MCF 10A (cell line): ENCODE measurements at regions of chr3 and their contacts with region 1.

Region 1: DNA sequence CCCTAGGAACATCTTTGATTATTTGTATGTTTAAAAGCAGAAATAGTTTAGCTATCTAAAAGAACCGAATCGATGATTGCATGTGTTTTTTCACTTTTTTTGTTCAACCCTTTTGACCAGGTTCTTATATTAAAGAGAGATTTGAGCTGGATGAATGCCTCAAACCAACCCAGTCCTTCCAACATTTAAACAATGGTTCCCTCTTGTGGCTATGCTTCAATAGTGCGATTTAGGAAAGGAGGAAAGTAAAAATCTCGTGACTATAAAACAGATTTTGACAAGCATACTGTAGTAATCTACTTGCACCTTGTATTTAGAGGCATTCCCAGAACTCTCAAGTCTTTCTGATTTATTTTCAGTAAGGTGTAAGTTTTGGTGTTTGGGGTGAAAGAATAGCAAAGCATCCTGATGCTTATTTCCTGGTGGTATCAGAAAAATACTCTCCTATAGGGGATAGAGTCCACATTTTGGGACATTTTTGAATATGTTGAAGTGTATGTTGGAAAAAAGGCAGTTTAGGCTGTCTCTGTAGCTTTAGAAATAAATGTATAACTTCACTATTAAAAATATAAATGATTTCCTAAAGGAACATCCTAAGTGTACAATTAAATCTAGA is 159.6 kb upstream of the KCNH8 start:
- DNase-seq: peak; percentile 63
- H3K4me3 Mint-ChIP-seq: no peak overlapping the region
- H3K27ac Mint-ChIP-seq: no peak overlapping the region
- H3K4me1 Mint-ChIP-seq: peaks cover 6% of the 10 kb centered on the region
- H3K27me3 Mint-ChIP-seq: no peaks in the 10 kb centered on the region
- CTCF ChIP-seq: peak; percentile 73

Region 2: GRCh38 chr3:17894434-17895060 is 1094.2 kb before region 1 on chr3:
- CTCF ChIA-PET with region 1: no interaction called
- POLR2A ChIA-PET with region 1: no interaction called
- intact Hi-C with region 1: loop called (anchors 5 kb)
- DNase-seq: peak; percentile 75
- H3K4me3 Mint-ChIP-seq: no peak overlapping the region
- H3K27ac Mint-ChIP-seq: no peak overlapping the region
- H3K4me1 Mint-ChIP-seq: peaks cover 9% of the 10 kb centered on the region
- H3K27me3 Mint-ChIP-seq: no peaks in the 10 kb centered on the region
- CTCF ChIP-seq: peak; percentile 63

Region 3: GRCh38 chr3:18424729-18425640 is 563.7 kb before region 1 on chr3 and contains the start of gene SATB1:
- CTCF ChIA-PET with region 1: no interaction called
- POLR2A ChIA-PET with region 1: no interaction called
- intact Hi-C with region 1: loop called (anchors 10 kb)
- DNase-seq: peak; percentile 39
- H3K4me3 Mint-ChIP-seq: peak within 1 kb of the TSS; percentile 78
- H3K27ac Mint-ChIP-seq: no peak within 1 kb of the TSS
- H3K4me1 Mint-ChIP-seq: peaks cover 9% of the 10 kb centered on the region
- H3K27me3 Mint-ChIP-seq: peaks cover 99% of the 10 kb centered on the region
- CTCF ChIP-seq: no peak
- total RNA-seq, gene SATB1: 0.23 and 0.44 TPM in 2 replicates

Region 4: GRCh38 chr3:18772699-18773305 is 215.9 kb before region 1 on chr3:
- CTCF ChIA-PET with region 1: no interaction called
- POLR2A ChIA-PET with region 1: no interaction called
- intact Hi-C with region 1: loop called (anchors 10 kb)
- DNase-seq: no peak
- H3K4me3 Mint-ChIP-seq: no peak overlapping the region
- H3K27ac Mint-ChIP-seq: no peak overlapping the region
- H3K4me1 Mint-ChIP-seq: no peaks in the 10 kb centered on the region
- H3K27me3 Mint-ChIP-seq: peaks cover 13% of the 10 kb centered on the region
- CTCF ChIP-seq: no peak

Region 5: DNA sequence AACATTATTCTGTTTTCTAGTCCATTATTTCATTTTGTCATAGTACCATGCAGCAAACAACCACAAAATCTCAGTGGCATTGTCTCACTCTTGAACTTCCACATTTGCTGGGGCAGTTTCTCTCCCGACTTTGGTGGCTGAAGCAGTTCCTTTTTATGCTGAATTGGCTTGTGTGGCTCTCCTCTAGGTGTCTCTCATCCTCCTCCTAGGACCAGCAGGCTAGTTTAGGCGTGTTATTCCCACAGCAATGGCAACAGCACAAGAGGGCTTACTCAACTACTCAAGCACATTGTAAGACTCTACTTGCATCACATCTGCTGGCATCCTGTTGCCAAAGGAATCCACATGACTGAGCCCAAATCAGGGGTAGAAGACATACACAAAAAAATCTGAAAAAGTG is 42.2 kb before region 1 on chr3:
- CTCF ChIA-PET with region 1: interaction called, 26 read pairs
- POLR2A ChIA-PET with region 1: no interaction called
- intact Hi-C with region 1: loop called (anchors 1 kb)
- DNase-seq: peak; percentile 90
- H3K4me3 Mint-ChIP-seq: no peak overlapping the region
- H3K27ac Mint-ChIP-seq: no peak overlapping the region
- H3K4me1 Mint-ChIP-seq: peaks cover 10% of the 10 kb centered on the region
- H3K27me3 Mint-ChIP-seq: no peaks in the 10 kb centered on the region
- CTCF ChIP-seq: no peak

Region 6: GRCh38 chr3:20037255-20037997 is 1048.7 kb after region 1 on chr3:
- CTCF ChIA-PET with region 1: no interaction called
- POLR2A ChIA-PET with region 1: no interaction called
- intact Hi-C with region 1: no loop called
- DNase-seq: no peak
- H3K4me3 Mint-ChIP-seq: no peak overlapping the region
- H3K27ac Mint-ChIP-seq: no peak overlapping the region
- H3K4me1 Mint-ChIP-seq: peaks cover 11% of the 10 kb centered on the region
- H3K27me3 Mint-ChIP-seq: no peaks in the 10 kb centered on the region
- CTCF ChIP-seq: no peak